PC-9 (cell line): ENCODE measurements at regions of chr11 and their contacts with region 1.

Region 1: GRCh38 chr11:61899146-61899841 is 7.9 kb upstream of the FADS3 start:
- DNase-seq: peak; percentile 73 to 90
- H3K4me3 ChIP-seq: no peak overlapping the region
- H3K27ac ChIP-seq: no peak overlapping the region
- H3K4me1 ChIP-seq: no peaks in the 10 kb centered on the region; the same call in 1 of the 2 replicates
- H3K27me3 ChIP-seq: no peaks in the 10 kb centered on the region
- CTCF ChIP-seq: peak; percentile 100

Region 2: GRCh38 chr11:61803889-61804647 is 95.2 kb before region 1 on chr11:
- CTCF ChIA-PET with region 1: interaction called, 10 read pairs
- POLR2A ChIA-PET with region 1: no interaction called
- intact Hi-C with region 1: no loop called
- DNase-seq: no peak
- H3K4me3 ChIP-seq: no peak overlapping the region
- H3K27ac ChIP-seq: no peak overlapping the region
- H3K4me1 ChIP-seq: no peaks in the 10 kb centered on the region
- H3K27me3 ChIP-seq: no peaks in the 10 kb centered on the region
- CTCF ChIP-seq: no peak

Region 3: DNA sequence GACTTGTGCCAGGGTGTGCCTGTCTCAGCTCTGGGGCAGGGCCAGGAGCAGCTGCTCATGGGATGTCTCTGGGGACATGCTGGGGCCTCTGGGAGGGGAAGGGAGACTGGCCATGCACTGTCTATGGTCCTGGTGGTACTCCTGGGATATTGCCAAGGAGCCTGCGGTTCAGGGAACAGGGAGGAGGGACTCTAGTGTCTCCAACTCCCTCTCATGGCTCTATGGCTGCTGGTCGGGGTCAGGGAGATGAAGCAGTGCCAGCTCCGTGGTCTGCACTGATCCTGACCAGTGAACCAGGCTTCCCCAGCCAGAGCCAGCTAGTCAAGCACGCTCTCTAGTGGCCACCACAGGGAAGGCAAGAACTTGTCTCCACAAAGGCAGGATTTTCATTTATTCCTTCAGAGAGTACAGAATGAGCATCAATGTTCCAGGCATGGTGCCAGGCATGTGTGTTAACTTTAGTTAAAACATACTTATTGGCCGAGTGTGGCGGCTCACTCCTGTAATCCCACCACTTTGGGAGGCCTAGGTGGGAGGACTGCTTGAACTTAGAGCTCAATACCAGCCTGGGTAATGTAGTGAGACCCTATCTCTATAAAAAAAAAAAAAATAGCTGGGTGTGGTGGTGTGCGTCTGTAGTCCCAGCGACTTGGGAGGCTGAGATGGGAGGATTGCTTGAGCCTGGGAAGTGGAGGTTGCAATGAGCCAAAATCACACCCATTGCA is 48.4 kb after region 1 on chr11:
- CTCF ChIA-PET with region 1: interaction called, 30 read pairs
- POLR2A ChIA-PET with region 1: no interaction called
- intact Hi-C with region 1: loop called (anchors 1 kb)
- DNase-seq: peak; percentile 61 to 77
- H3K4me3 ChIP-seq: no peak overlapping the region
- H3K27ac ChIP-seq: no peak overlapping the region
- H3K4me1 ChIP-seq: peaks cover 23% of the 10 kb centered on the region
- H3K27me3 ChIP-seq: no peaks in the 10 kb centered on the region
- CTCF ChIP-seq: peak; percentile 95

Region 4: DNA sequence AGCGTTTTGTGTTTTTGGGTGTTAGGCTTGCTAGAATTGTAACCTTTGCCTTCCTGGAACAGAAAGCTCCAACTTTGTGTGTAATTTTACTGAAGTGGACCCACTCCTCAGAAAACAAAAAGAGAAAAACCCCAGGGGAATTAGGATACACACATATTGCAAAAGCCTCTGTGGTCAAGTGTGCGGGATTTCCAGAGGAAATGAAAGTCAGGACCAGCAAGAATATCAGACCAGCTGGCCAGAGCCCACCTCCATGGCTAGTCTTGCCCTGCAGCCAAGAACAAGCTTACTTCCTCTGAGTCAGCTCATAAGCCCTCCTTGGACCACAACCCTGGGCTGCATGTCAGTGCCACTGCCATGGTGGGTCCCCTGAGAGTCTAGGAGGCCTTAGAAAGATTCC is 105.2 kb after region 1 on chr11:
- CTCF ChIA-PET with region 1: no interaction called
- POLR2A ChIA-PET with region 1: no interaction called
- intact Hi-C with region 1: no loop called
- DNase-seq: no peak
- H3K4me3 ChIP-seq: no peak overlapping the region
- H3K27ac ChIP-seq: no peak overlapping the region
- H3K4me1 ChIP-seq: 0 out of 2 replicates have a peak, but pooled peaks cover 3% of the 10 kb centered on the region
- H3K27me3 ChIP-seq: no peaks in the 10 kb centered on the region
- CTCF ChIP-seq: no peak

Region 5: DNA sequence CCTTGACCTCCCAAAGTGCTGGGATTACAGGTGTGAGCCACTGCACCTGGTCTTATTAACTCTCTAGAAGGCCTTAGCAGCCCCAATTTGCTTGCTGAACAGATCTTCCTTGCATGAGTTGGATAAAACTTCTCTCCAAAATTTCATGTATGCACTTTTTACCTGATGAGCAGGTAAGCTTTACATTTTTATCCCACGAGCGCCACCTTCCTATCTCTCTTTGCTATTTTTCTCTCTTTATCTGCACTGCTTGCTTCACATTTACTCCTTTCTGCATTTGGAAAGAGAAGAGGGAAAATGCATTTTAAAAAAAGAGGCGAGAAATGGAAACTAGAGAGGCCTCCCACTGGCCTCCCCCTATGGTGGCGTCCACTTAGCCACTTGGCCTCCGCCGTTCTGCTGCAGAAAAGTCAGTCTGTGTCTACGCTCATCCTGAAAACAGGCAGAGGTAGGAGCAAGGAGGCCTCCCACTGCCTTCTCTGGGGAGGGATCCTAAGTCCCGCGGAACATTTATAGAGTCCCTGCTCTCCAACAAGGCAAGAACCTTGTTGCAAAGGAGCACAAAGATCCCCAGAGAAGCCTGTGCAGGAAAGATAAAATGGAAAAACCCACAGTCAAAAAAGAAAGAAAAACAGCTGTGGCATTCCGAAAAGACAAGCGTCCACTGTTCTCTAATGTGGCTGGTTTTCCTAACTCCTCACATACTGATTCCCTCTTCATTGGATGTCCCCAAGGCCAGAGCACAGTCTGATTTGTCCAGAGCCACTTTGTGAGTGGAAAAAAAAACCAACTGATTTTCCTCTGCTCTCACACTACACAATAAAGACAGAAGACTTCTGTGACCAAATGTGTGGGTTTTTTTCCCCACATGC is 162.3 kb after region 1 on chr11:
- CTCF ChIA-PET with region 1: interaction called, 12 read pairs
- POLR2A ChIA-PET with region 1: no interaction called
- intact Hi-C with region 1: no loop called
- DNase-seq: peak in 1 of 2 experiments; percentile 15
- H3K4me3 ChIP-seq: no peak overlapping the region
- H3K27ac ChIP-seq: no peak overlapping the region
- H3K4me1 ChIP-seq: 0 out of 2 replicates have a peak, but pooled peaks cover 4% of the 10 kb centered on the region
- H3K27me3 ChIP-seq: no peaks in the 10 kb centered on the region
- CTCF ChIP-seq: peak; percentile 79

Region 6: DNA sequence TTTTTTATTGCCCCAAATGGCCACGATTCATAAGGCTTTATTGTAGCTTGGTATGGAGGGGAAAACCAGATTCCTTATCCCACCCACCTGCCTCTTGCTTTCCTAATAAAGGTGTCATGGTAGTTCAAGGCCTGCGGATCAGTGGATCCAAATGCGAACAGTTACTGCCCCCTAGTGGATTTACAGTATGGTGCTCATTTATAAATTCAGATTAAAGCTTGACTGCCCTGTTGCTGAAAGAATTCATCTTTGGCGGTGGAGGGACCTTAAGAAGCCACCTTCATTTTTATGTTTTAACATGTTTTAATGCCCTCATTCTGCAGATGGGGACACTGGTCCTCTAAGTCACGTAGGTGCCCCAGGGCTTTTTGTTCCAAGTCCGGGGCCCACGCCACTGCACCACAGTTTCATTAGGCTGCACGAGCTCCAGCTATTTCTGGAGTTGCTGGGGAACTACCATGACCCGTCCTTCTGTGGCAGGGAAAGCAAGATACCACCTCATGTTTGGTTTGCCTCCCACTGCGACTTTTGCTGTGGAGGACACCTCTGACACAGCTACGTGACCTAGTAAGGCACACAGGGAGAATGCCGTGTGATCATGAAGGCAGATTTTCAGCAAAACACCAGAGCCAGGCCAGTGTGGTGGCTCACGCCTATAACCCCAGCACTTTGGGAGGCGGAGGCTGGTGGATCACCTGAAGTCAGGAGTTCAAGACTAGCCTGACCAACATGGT is 208.9 kb after region 1 on chr11:
- CTCF ChIA-PET with region 1: interaction called, 25 read pairs
- POLR2A ChIA-PET with region 1: no interaction called
- intact Hi-C with region 1: loop called (anchors 1 kb)
- DNase-seq: peak; percentile 44 to 53
- H3K4me3 ChIP-seq: no peak overlapping the region
- H3K27ac ChIP-seq: no peak overlapping the region
- H3K4me1 ChIP-seq: no peaks in the 10 kb centered on the region
- H3K27me3 ChIP-seq: no peaks in the 10 kb centered on the region
- CTCF ChIP-seq: peak; percentile 93